ENCODE measurements at regions of chr2 and their contacts with region 1.

Region 1: DNA sequence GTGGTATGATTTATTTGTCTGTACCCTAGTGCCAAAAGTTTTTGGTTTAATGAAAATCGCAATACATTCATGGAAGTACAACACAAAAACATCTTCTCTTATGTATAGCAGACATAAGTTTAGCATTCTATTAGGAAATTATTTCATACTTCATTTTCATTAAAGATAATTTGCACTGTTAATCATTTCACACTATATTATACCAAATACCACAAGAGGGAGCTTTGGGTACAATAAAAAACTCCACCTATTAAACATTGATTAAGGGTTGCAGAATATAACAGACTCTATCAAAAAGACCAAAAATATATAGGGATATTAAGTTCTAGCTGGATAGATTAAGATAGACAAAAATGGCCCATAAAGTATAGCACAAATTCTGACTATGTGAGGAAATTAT is 79.0 kb downstream of the SLC66A3 start:
- DNase-seq: peak in 1 of 9 donors; percentile 8
- ATAC-seq: no peak
- H3K4me3 ChIP-seq: no peak overlapping the region
- H3K4me3 Mint-ChIP-seq: no peak overlapping the region
- H3K27ac ChIP-seq: no peak overlapping the region
- H3K27ac Mint-ChIP-seq: no peak overlapping the region
- H3K4me1 ChIP-seq: no peaks in the 10 kb centered on the region
- H3K4me1 Mint-ChIP-seq: peaks cover 0 to 11% (median 5%) of the 10 kb centered on the region in 7 donors
- H3K27me3 ChIP-seq: no peaks in the 10 kb centered on the region
- H3K27me3 Mint-ChIP-seq: no peaks in the 10 kb centered on the region

Region 2: DNA sequence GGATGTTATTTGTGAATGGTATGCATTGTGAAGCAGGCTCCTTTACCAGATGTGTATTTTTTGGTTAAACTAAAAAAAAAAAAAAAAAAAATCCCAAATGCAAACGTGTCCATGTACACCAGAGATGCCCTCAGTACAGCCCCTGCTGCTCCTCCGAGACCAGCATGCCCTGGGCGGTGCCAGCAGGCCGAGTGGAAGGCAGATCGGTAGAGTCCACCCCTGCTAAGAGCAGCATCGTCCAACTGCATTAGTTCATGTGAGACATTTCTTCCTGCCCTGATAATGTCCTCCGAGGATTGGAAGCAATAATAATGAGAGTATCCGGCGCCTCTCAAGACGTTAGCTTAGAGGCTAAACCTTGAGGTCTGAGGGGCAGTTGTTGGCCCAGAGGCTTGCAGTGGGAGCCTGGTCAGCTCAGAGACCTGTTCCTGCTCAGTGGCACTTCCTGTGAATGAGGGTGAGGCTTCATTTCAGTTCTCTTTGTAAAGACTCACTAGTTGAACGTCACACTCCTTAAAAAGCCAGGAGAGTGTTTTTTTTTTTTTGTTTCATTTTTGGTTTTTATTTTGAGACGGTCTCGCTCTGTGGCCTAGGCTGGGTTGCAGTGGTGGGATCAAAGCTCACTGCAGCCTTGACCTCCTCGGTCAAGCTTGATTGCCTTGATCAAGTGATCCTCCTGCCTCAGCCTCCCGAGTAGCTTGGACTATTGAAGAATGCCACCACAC is 73.4 kb before region 1 on chr2:
- CTCF ChIA-PET with region 1: no interaction called
- POLR2A ChIA-PET with region 1: no interaction called
- intact Hi-C with region 1: no loop called
- DNase-seq: peak in 3 of 9 donors; percentile 12 to 21 (median 18)
- ATAC-seq: peak; percentile 71
- H3K4me3 ChIP-seq: no peak overlapping the region
- H3K4me3 Mint-ChIP-seq: peak overlapping the region; percentile 29 to 66 (median 50)
- H3K27ac ChIP-seq: peak overlapping the region; percentile 54
- H3K27ac Mint-ChIP-seq: peak overlapping the region; percentile 56 to 95 (median 85)
- H3K4me1 ChIP-seq: peaks cover 13% of the 10 kb centered on the region in 2 donors
- H3K4me1 Mint-ChIP-seq: peaks cover 15 to 33% (median 25%) of the 10 kb centered on the region in 7 donors
- H3K27me3 ChIP-seq: no peaks in the 10 kb centered on the region
- H3K27me3 Mint-ChIP-seq: no peaks in the 10 kb centered on the region

Region 3: DNA sequence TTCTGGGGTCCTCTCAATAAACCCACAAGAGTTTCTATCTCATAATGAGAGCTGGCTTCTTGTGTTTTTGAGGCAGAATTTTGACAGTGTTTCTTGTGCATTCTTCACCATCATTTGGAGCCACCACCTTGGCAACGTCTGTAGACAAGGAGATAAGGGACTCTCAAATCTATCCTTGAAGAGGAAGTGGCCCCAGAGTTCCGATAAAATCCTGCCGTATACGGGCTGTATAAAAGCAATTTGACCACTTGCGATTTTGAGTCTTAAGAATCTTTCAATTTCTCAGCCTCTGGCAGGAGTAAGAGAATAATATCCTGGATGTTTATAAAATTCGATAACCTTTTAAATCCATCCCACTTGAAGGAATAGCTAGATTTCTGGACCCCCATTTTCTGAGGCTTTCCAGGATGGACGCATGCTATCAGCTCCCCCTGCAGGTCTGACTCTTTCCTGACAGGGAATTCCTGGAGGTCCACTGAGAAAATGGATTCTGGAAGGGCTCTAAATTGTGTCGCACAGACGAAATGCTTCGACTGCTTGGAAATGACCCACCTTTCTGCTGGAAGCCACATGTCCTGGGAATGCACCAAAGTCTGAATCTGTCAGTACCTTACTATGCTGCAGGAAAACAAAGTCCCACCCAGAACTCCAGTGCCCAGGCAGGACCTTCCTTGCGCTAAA is 177.6 kb after region 1 on chr2:
- CTCF ChIA-PET with region 1: no interaction called
- POLR2A ChIA-PET with region 1: no interaction called
- intact Hi-C with region 1: loop called in 1 of 2 experiments (anchors 1 kb)
- DNase-seq: no peak
- ATAC-seq: no peak
- H3K4me3 ChIP-seq: no peak overlapping the region
- H3K4me3 Mint-ChIP-seq: peak overlapping the region in 4 of 10 donors; percentile 18 to 40 (median 26)
- H3K27ac ChIP-seq: no peak overlapping the region
- H3K27ac Mint-ChIP-seq: no peak overlapping the region
- H3K4me1 ChIP-seq: no peaks in the 10 kb centered on the region
- H3K4me1 Mint-ChIP-seq: no peaks in the 10 kb centered on the region
- H3K27me3 ChIP-seq: no peaks in the 10 kb centered on the region
- H3K27me3 Mint-ChIP-seq: peaks cover 4 to 22% (median 19%) of the 10 kb centered on the region in 5 donors

Region 4: DNA sequence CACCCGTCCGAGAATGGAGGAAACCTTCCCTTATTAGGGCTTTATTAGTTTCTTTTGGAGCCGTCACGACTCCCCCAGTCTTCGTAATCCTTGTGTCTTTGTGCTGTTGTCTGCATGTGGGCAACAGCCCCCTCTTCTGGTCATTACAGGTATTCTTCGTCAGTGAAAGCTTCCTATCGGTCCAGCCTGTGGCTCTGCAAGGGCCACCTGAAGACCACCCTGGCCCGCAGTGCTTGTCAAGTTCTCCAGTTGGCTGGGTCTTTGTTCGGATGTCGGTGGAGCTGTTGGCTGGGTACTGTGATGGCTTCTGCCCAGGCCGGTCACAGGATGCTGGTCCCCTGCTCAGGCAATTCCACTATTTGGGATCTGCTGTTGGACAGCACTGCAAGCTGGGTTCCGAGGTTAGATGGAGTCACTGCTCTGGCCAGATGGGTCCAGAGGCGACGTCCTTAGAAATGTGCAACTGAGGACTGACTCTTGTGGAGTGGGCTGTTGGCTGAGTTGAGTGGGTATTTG is 212.5 kb after region 1 on chr2:
- CTCF ChIA-PET with region 1: no interaction called
- POLR2A ChIA-PET with region 1: no interaction called
- intact Hi-C with region 1: loop called in 1 of 2 experiments (anchors 1 kb)
- DNase-seq: peak; percentile 16 to 65 (median 54)
- ATAC-seq: peak; percentile 83
- H3K4me3 ChIP-seq: no peak overlapping the region
- H3K4me3 Mint-ChIP-seq: no peak overlapping the region
- H3K27ac ChIP-seq: no peak overlapping the region
- H3K27ac Mint-ChIP-seq: peak overlapping the region in 2 of 9 donors; percentile 17 to 52
- H3K4me1 ChIP-seq: no peaks in the 10 kb centered on the region
- H3K4me1 Mint-ChIP-seq: no peaks in the 10 kb centered on the region
- H3K27me3 ChIP-seq: no peaks in the 10 kb centered on the region
- H3K27me3 Mint-ChIP-seq: no peaks in the 10 kb centered on the region

Measured in naive thymus-derived CD4-positive, alpha-beta T cell (primary cell).